ENCODE measurements at regions of chr21 and their contacts with region 1.

Region 1: GRCh38 chr21:36927719-36928117 is 38.8 kb downstream of the HLCS start:
- DNase-seq: peak; percentile 74 to 83 (median 77)
- ATAC-seq: peak; percentile 60 to 88 (median 82)
- H3K4me3 ChIP-seq: no peak overlapping the region
- H3K27ac ChIP-seq: no peak overlapping the region
- H3K4me1 ChIP-seq: peaks cover 0 to 13% (median 1%) of the 10 kb centered on the region in 12 donors
- H3K27me3 ChIP-seq: no peaks in the 10 kb centered on the region
- CTCF ChIP-seq: peak; percentile 88 to 99 (median 92)
- POLR2A ChIP-seq: no peak

Region 2: GRCh38 chr21:36419996-36420395 is 507.7 kb before region 1 on chr21:
- intact Hi-C with region 1: loop called in 7 of 10 experiments (anchors 2 to 10 kb)
- DNase-seq: peak; percentile 81 to 93 (median 85)
- ATAC-seq: peak; percentile 87 to 95 (median 94)
- H3K4me3 ChIP-seq: no peak overlapping the region
- H3K27ac ChIP-seq: peak overlapping the region in 1 of 12 donors; percentile 9
- H3K4me1 ChIP-seq: peaks cover 0 to 21% (median 7%) of the 10 kb centered on the region in 12 donors
- H3K27me3 ChIP-seq: no peaks in the 10 kb centered on the region
- CTCF ChIP-seq: peak; percentile 68 to 90 (median 80)
- POLR2A ChIP-seq: no peak

Region 3: GRCh38 chr21:36504067-36505058 is 423.4 kb before region 1 on chr21:
- intact Hi-C with region 1: loop called (anchors 1 to 5 kb)
- DNase-seq: peak in 1 of 5 donors; percentile 21
- ATAC-seq: no peak
- H3K4me3 ChIP-seq: no peak overlapping the region
- H3K27ac ChIP-seq: no peak overlapping the region
- H3K4me1 ChIP-seq: peaks cover 0 to 8% (median 0%) of the 10 kb centered on the region in 12 donors
- H3K27me3 ChIP-seq: peaks cover 0 to 8% (median 0%) of the 10 kb centered on the region in 9 donors
- CTCF ChIP-seq: peak; percentile 90 to 97 (median 92)
- POLR2A ChIP-seq: no peak

Region 4: GRCh38 chr21:36661511-36662309 is 266.0 kb before region 1 on chr21:
- intact Hi-C with region 1: loop called in 5 of 10 experiments (anchors 5 to 10 kb)
- DNase-seq: peak in 3 of 5 donors; percentile 17 to 42 (median 36)
- ATAC-seq: peak in 1 of 4 donors; percentile 54
- H3K4me3 ChIP-seq: no peak overlapping the region
- H3K27ac ChIP-seq: no peak overlapping the region
- H3K4me1 ChIP-seq: no peaks in the 10 kb centered on the region
- H3K27me3 ChIP-seq: peaks cover 0 to 59% (median 0%) of the 10 kb centered on the region in 9 donors
- CTCF ChIP-seq: peak; percentile 14 to 58 (median 50)
- POLR2A ChIP-seq: no peak

Region 5: DNA sequence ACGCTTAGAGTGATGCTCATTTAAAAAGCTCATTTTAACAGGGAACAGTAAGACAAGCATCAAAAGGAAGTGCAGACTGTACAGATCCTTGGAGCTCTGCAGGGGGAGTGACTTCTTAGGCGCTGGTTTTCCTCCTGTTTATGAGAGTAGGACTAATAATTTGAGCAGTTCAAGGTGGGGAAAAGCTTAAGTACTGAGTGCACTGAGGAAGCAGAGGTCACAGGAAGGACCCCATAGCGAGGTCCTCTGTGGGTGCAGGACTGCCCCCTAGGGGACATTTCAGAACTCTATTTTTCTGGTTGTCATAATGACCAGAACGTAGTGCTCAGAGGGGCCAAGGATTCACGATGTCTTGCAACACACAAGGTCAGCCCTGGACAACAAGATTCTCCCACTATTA is 73.3 kb before region 1 on chr21:
- intact Hi-C with region 1: loop called in 1 of 10 experiments (anchors 10 kb)
- DNase-seq: peak in 4 of 5 donors; percentile 30 to 41 (median 36)
- ATAC-seq: peak; percentile 51 to 85 (median 77)
- H3K4me3 ChIP-seq: no peak overlapping the region
- H3K27ac ChIP-seq: no peak overlapping the region
- H3K4me1 ChIP-seq: peaks cover 0 to 9% (median under 1%) of the 10 kb centered on the region in 12 donors
- H3K27me3 ChIP-seq: no peaks in the 10 kb centered on the region
- CTCF ChIP-seq: peak; percentile 55 to 76 (median 65)
- POLR2A ChIP-seq: no peak

Region 6: DNA sequence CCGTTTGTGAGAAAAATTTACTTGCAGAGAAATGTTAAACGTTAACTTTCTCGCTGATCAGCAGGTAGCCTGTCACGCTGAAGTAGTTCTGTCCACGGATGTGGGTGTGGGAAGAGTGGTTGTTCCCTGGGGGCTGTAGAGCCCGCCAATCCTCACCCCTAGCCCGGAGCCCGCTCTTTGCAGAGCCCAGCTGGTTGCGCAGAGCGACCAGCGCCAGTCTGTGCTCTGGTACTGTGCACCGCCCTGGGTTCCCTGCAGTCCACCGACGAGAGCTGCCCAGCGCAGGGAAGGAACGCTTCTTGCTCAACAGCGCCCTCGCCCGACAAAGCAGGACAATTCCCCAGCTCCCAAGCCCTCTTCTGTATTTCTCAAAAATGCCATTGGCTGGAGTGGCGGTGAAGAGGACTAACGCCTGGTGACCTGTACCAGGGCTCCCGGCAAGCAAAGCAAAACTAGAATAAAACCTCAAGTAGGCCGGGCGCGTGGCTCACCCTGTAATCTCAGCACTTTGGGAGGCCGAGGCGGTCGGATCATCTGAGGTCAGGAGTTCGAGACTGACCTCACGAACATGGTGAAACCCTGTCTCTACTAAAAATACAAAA is 82.1 kb after region 1 on chr21:
- intact Hi-C with region 1: no loop called
- DNase-seq: peak; percentile 77 to 92 (median 80)
- ATAC-seq: peak; percentile 85 to 99 (median 95)
- H3K4me3 ChIP-seq: peak overlapping the region in 7 of 12 donors; percentile 13 to 46 (median 21)
- H3K27ac ChIP-seq: no peak overlapping the region
- H3K4me1 ChIP-seq: peaks cover 0 to 19% (median 10%) of the 10 kb centered on the region in 12 donors
- H3K27me3 ChIP-seq: peaks cover 14 to 90% (median 44%) of the 10 kb centered on the region in 9 donors
- CTCF ChIP-seq: peak; percentile 67 to 89 (median 82)
- POLR2A ChIP-seq: no peak

Region 7: DNA sequence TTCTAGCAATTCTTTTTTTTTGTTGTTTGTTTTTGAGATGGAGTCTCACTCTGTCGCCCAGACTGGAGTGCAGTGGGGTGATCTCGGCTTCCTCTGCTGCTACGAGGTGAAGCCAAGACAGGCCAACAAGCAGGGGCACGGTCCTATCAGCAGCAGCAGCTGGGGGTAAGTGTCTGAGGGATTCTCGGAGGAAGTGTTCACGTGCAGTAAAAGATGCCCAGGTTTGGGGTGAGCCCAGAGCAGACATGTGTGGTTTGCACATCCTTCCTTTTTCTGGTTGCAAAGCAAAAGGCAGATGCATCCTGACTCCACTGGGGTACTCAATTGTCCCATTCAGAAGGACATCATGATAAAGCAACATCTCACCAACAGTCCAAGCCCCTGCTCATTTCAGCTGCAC is 117.4 kb after region 1 on chr21:
- intact Hi-C with region 1: no loop called
- DNase-seq: no peak
- ATAC-seq: no peak
- H3K4me3 ChIP-seq: no peak overlapping the region
- H3K27ac ChIP-seq: no peak overlapping the region
- H3K4me1 ChIP-seq: no peaks in the 10 kb centered on the region
- H3K27me3 ChIP-seq: peaks cover 0 to 4% (median 0%) of the 10 kb centered on the region in 9 donors
- CTCF ChIP-seq: no peak
- POLR2A ChIP-seq: no peak